Ovary (tissue), 10 donors: ENCODE measurements at regions of chr6 and their contacts with region 1.

Region 1: DNA sequence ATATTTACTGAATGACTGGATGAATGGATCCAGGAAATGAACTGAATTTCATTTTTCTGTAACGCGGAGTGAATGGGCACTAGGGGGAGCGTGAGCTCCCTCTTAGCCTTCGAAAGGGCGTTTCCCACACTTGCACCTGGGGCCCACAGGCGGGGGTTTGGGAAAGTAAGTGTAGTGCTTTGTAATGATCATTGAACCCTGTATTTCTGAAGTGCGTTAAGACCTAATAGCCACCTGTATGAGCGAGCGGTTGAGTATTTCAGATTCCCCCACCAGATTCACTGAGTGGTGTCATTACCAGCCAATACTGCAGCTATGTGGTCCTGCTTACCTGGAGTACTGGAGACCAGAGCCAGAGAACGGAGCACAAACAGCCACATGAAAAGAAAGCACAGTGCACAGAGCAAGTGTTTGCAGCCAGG is 10.5 kb downstream of the SYTL3 start:
- DNase-seq: no peak
- H3K4me3 ChIP-seq: no peak overlapping the region
- H3K27ac ChIP-seq: no peak overlapping the region
- H3K4me1 ChIP-seq: peaks cover 3% of the 10 kb centered on the region
- H3K27me3 ChIP-seq: no peaks in the 10 kb centered on the region
- CTCF ChIP-seq: no peak
- EP300 ChIP-seq: no peak
- POLR2A ChIP-seq: no peak

Region 2: GRCh38 chr6:158488065-158488464 is 172.3 kb before region 1 on chr6:
- intact Hi-C with region 1: no loop called
- DNase-seq: no peak
- H3K4me3 ChIP-seq: no peak overlapping the region
- H3K27ac ChIP-seq: no peak overlapping the region
- H3K4me1 ChIP-seq: no peaks in the 10 kb centered on the region
- H3K27me3 ChIP-seq: no peaks in the 10 kb centered on the region
- CTCF ChIP-seq: no peak
- EP300 ChIP-seq: no peak
- POLR2A ChIP-seq: no peak

Region 3: GRCh38 chr6:158536084-158536890 is 124.1 kb before region 1 on chr6:
- intact Hi-C with region 1: loop called in 1 of 4 experiments (anchors 10 kb)
- DNase-seq: peak; percentile 63 to 88 (median 73)
- H3K4me3 ChIP-seq: peak overlapping the region; percentile 38
- H3K27ac ChIP-seq: no peak overlapping the region
- H3K4me1 ChIP-seq: peaks cover 10% of the 10 kb centered on the region
- H3K27me3 ChIP-seq: no peaks in the 10 kb centered on the region
- CTCF ChIP-seq: no peak
- EP300 ChIP-seq: no peak
- POLR2A ChIP-seq: no peak